Body of pancreas (tissue), 4 donors: ENCODE measurements at regions of chr4 and their contacts with region 1.

Region 1: GRCh38 chr4:115505326-115505725 is 391.9 kb upstream of the NDST4 start:
- DNase-seq: no peak
- ATAC-seq: no peak
- H3K4me3 ChIP-seq: no peak overlapping the region
- H3K27ac ChIP-seq: no peak overlapping the region
- H3K4me1 ChIP-seq: no peaks in the 10 kb centered on the region
- H3K27me3 ChIP-seq: no peaks in the 10 kb centered on the region
- CTCF ChIP-seq: no peak
- POLR2A ChIP-seq: no peak

Region 2: DNA sequence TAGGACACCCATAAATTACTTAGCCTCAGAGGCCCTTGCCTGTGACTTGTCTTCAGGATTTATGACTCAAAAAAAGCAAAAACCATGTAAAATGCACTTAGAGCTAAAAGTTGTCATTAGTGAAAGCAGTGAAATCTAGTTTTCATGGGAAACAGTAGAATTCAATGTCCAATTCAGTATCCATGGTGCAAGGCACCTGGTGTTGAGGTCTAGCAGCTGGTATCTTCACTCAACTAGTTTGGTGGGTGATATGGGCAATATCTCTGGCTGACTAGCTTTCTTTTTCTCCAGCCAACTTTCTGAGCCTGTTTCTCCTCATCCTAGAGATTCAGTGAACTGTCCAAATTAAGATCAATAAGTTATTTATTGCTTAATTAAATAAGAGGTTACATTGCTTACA is 162.2 kb before region 1 on chr4:
- intact Hi-C with region 1: loop called (anchors 5 kb)
- DNase-seq: no peak
- ATAC-seq: no peak
- H3K4me3 ChIP-seq: no peak overlapping the region
- H3K27ac ChIP-seq: no peak overlapping the region
- H3K4me1 ChIP-seq: no peaks in the 10 kb centered on the region
- H3K27me3 ChIP-seq: no peaks in the 10 kb centered on the region
- CTCF ChIP-seq: no peak
- POLR2A ChIP-seq: no peak